Ovary (tissue), 10 donors: ENCODE measurements at regions of chr3 and their contacts with region 1.

Region 1: GRCh38 chr3:15332405-15333098 is at the start of gene SH3BP5:
- DNase-seq: peak; percentile 79 to 88 (median 83)
- H3K4me3 ChIP-seq: peak within 1 kb of the TSS; percentile 83
- H3K27ac ChIP-seq: peak within 1 kb of the TSS; percentile 85 to 86
- H3K4me1 ChIP-seq: peaks cover 16% of the 10 kb centered on the region
- H3K27me3 ChIP-seq: no peaks in the 10 kb centered on the region
- CTCF ChIP-seq: peak; percentile 73 to 95 (median 87)
- EP300 ChIP-seq: no peak
- POLR2A ChIP-seq: peak; percentile 71
- total RNA-seq, gene SH3BP5: 80.4 to 205 (median 142) TPM

Region 2: GRCh38 chr3:15268033-15268631 is 64.4 kb before region 1 on chr3:
- intact Hi-C with region 1: loop called (anchors 2 kb)
- DNase-seq: peak; percentile 82 to 91 (median 90)
- H3K4me3 ChIP-seq: no peak overlapping the region
- H3K27ac ChIP-seq: peak overlapping the region; percentile 25 to 53
- H3K4me1 ChIP-seq: peaks cover 15% of the 10 kb centered on the region
- H3K27me3 ChIP-seq: no peaks in the 10 kb centered on the region
- CTCF ChIP-seq: peak; percentile 84 to 95 (median 93)
- EP300 ChIP-seq: no peak
- POLR2A ChIP-seq: no peak

Region 3: GRCh38 chr3:15291589-15292541 is 40.7 kb before region 1 on chr3:
- intact Hi-C with region 1: loop called in 1 of 4 experiments (anchors 5 kb)
- DNase-seq: no peak
- H3K4me3 ChIP-seq: no peak overlapping the region
- H3K27ac ChIP-seq: peak overlapping the region; percentile 34 to 69
- H3K4me1 ChIP-seq: peaks cover 22% of the 10 kb centered on the region
- H3K27me3 ChIP-seq: no peaks in the 10 kb centered on the region
- CTCF ChIP-seq: no peak
- EP300 ChIP-seq: no peak
- POLR2A ChIP-seq: no peak

Region 4: DNA sequence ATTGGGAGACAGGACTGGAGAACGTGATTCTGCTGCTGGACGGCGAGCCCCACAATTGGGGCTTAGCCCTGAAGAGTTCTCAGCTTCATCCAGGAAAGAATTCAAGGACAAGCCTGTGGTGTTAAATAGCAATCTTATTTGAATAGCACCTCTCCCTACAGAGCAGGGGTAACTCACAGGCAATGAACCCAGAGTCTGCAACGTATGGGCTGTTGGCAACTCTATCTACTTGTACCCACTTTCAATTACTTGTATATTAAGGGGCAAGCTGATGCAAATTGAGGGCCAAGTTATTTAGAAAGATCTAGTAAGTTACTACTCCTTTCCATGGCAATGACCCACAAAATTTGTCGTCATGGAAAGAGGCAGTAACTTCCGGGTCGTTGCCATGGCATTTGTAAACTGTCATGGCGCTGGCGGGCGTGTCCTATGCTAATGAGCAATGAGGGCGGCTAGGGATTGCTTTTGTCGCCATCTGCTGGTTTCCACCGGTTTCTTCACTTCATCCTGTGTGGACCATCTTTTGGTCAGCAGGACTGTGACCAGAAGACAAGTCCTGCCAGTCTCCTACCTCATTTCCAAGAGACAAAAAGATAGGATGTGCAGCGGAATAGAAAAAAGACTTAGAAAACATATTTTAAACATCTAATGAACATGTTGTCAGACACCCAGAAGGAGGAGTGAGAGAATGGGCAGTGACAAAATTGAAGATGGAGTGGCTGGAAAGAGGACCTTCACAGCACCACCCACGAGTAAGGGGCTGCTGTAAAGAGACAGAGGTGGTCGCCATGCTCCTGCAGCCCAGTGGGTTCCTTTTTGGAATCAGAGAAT is 45.6 kb after region 1 on chr3:
- intact Hi-C with region 1: loop called in 2 of 4 experiments (anchors 5 kb)
- DNase-seq: peak; percentile 93 to 98 (median 96)
- H3K4me3 ChIP-seq: no peak overlapping the region
- H3K27ac ChIP-seq: peak overlapping the region; percentile 2 to 66
- H3K4me1 ChIP-seq: peaks cover 2% of the 10 kb centered on the region
- H3K27me3 ChIP-seq: no peaks in the 10 kb centered on the region
- CTCF ChIP-seq: peak; percentile 90 to 93 (median 92)
- EP300 ChIP-seq: peak; percentile 77
- POLR2A ChIP-seq: no peak